ENCODE measurements at regions of chr16 and their contacts with region 1.

Region 1: GRCh38 chr16:70638814-70639792 is 7.3 kb upstream of the IL34 start:
- DNase-seq: peak; percentile 87
- ATAC-seq: peak; percentile 58
- H3K4me3 ChIP-seq: no peak overlapping the region
- H3K27ac ChIP-seq: peak overlapping the region; percentile 25; the same call in 1 of the 2 replicates
- H3K4me1 ChIP-seq: peaks cover 11% of the 10 kb centered on the region
- H3K27me3 ChIP-seq: no peaks in the 10 kb centered on the region
- CTCF ChIP-seq: no peak
- POLR2A ChIP-seq: no peak
- RAD21 ChIP-seq: no peak

Region 2: GRCh38 chr16:70589998-70590471 is 49.1 kb before region 1 on chr16:
- CTCF ChIA-PET with region 1: no interaction called
- POLR2A ChIA-PET with region 1: no interaction called
- dilution Hi-C with region 1: no loop called
- in situ Hi-C with region 1: loop called (anchors 5 kb)
- intact Hi-C with region 1: loop called (anchors 5 kb)
- DNase-seq: peak; percentile 85
- ATAC-seq: peak; percentile 82
- H3K4me3 ChIP-seq: no peak overlapping the region
- H3K27ac ChIP-seq: no peak overlapping the region
- H3K4me1 ChIP-seq: peaks cover 8% of the 10 kb centered on the region
- H3K27me3 ChIP-seq: no peaks in the 10 kb centered on the region; the same call in 1 of the 2 replicates
- CTCF ChIP-seq: no peak
- POLR2A ChIP-seq: no peak
- RAD21 ChIP-seq: no peak

Region 3: DNA sequence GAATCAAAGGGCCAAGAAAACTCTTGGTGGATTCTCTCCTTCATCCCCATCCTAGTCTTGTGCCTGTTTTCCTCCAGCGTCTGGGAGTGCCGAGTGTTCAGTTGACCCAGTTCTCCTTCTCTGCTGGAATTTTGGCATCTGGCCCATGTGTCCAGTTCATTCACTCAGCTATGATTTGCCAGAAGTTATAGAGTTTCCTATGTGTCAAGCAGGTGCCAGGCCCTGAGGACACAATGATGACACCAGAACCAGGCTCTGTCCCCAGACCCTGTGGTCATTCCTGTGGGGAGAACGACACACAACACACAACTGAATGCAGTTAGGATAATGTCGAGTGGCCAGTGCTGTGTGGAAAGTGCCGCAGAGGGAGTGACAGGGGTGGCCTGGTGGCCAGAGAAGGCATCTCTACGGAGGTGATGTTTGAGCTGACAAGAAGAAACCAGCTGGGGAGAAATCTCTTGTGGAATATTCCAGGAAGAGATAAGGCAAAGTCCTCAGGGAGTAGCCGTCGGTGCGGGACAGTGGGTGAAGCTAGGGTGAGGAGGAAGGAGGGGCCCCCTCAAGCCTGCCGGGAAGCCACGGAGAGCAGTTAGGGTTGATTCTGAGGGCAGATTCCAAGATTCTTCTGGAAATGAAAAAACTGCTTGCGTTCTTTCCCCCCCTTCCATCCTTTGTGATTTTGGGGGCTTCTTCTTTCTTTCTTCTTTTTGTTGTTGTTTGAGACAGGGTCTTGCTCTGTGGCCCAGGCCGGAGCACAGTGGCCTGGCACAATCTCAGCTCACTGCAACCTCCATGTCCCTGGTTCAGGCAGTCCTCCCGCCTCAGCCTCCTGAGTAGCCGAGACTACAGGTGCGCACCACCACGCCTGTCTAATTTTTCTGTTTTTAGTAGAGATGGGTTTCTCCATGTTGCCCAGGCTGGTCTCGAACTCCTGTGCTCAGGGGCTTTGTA is 28.6 kb before region 1 on chr16:
- CTCF ChIA-PET with region 1: no interaction called
- POLR2A ChIA-PET with region 1: no interaction called
- dilution Hi-C with region 1: no loop called
- in situ Hi-C with region 1: no loop called
- intact Hi-C with region 1: no loop called
- DNase-seq: no peak
- ATAC-seq: no peak
- H3K4me3 ChIP-seq: no peak overlapping the region
- H3K27ac ChIP-seq: no peak overlapping the region
- H3K4me1 ChIP-seq: no peaks in the 10 kb centered on the region
- H3K27me3 ChIP-seq: peaks cover 8% of the 10 kb centered on the region
- CTCF ChIP-seq: no peak
- POLR2A ChIP-seq: no peak
- RAD21 ChIP-seq: no peak

Region 4: DNA sequence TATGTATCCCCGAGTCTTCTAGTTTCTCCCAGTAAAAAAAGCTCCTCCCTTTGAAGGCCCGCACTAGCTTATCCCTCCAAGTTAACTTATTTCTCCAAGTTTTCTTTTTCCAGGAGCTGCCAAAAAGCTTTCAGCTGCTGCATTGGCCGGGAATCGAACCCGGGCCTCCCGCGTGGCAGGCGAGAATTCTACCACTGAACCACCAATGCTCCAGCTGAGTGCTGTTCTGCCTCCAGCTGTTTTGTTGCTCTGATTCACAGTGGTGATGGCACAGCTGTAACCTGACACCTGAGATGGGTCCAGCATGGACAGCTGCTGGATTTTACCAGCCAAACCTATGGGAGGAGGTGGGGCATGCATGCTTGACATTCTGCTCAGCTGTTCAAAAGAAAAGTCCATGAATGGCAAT is 139.8 kb after region 1 on chr16:
- CTCF ChIA-PET with region 1: no interaction called
- POLR2A ChIA-PET with region 1: no interaction called
- dilution Hi-C with region 1: no loop called
- in situ Hi-C with region 1: no loop called
- intact Hi-C with region 1: no loop called
- DNase-seq: peak; percentile 92
- ATAC-seq: peak; percentile 89
- H3K4me3 ChIP-seq: no peak overlapping the region
- H3K27ac ChIP-seq: no peak overlapping the region
- H3K4me1 ChIP-seq: peaks cover 3% of the 10 kb centered on the region; the same call in 1 of the 2 replicates
- H3K27me3 ChIP-seq: no peaks in the 10 kb centered on the region
- CTCF ChIP-seq: no peak
- POLR2A ChIP-seq: no peak
- RAD21 ChIP-seq: no peak